B cell (primary cell): ENCODE measurements at regions of chr20 and their contacts with region 1.

Region 1: DNA sequence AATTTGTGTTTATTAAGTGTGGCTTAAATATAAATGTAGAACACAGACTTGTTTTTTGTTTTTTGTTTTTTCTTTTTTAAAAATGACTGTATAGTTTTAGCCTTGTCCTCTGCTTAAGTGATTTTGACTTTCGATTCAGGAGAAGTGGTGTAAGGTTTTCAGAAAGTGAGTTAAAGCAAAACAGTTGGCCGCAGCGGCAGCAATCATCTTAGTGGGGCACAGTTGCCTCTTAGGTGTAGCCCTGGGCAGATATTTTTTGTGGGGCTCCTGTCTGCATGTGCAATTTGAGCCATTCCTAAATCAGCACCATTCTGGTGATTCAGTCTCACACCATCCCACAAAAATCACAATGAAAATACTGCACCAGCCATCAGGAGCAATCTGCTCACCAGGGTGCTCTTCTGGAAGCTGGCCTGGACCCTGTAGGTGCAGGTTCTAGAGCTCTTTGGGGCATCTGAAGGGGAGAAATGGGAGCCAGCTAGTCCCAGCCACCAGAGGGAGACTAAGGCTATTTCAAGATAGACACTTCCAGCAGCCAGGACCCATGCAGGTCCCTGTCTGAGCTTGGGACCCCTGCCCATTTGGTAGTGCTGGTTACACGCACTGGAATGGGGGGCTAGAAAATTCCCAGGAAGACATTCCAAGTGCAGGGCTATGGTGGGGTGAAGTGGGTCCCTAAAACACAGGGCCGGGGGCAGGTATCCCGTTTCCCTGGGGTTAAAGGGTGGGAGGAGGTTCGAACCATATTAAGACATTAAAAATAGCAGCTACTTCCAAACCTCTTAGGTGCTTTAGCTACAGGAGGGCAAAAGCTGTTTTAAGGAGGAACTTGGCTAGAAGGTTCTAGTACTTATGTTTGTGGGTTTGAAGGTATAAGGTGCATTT is 156.6 kb downstream of the NFATC2 start:
- DNase-seq: peak; percentile 63
- ATAC-seq: peak; percentile 51
- H3K4me3 ChIP-seq: no peak overlapping the region
- H3K4me3 Mint-ChIP-seq: no peak overlapping the region
- H3K27ac ChIP-seq: peak overlapping the region in 1 of 2 donors; percentile 40
- H3K27ac Mint-ChIP-seq: peak overlapping the region; percentile 65
- H3K4me1 ChIP-seq: peaks cover 2 to 19% of the 10 kb centered on the region in 2 donors
- H3K4me1 Mint-ChIP-seq: peaks cover 24% of the 10 kb centered on the region
- H3K27me3 ChIP-seq: no peaks in the 10 kb centered on the region
- H3K27me3 Mint-ChIP-seq: no peaks in the 10 kb centered on the region
- CTCF ChIP-seq: peak; percentile 74

Region 2: DNA sequence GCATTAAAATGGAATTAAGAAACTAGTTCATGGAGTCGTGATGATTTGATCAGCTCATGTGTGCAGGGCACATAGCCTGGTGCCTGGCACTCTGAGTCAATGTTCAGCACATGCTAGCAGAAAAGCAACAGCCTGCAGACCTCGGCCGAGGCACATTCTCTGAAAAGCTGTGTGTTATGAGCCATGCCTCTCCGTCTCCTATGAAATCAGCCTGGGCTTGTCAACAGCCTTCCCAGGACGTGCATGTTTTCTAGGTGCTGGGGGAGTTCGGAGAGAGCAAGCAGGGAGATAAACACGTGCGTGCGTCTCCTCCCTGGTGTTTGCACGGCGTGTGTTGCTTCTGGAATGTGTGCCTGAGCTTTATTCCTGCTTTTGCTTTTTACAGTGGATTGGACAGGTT is 155.2 kb before region 1 on chr20:
- CTCF ChIA-PET with region 1: no interaction called
- POLR2A ChIA-PET with region 1: no interaction called
- intact Hi-C with region 1: no loop called
- DNase-seq: no peak
- ATAC-seq: no peak
- H3K4me3 ChIP-seq: no peak overlapping the region
- H3K4me3 Mint-ChIP-seq: no peak overlapping the region
- H3K27ac ChIP-seq: no peak overlapping the region
- H3K27ac Mint-ChIP-seq: no peak overlapping the region
- H3K4me1 ChIP-seq: no peaks in the 10 kb centered on the region
- H3K4me1 Mint-ChIP-seq: no peaks in the 10 kb centered on the region
- H3K27me3 ChIP-seq: no peaks in the 10 kb centered on the region
- H3K27me3 Mint-ChIP-seq: peaks cover 25% of the 10 kb centered on the region
- CTCF ChIP-seq: no peak

Region 3: DNA sequence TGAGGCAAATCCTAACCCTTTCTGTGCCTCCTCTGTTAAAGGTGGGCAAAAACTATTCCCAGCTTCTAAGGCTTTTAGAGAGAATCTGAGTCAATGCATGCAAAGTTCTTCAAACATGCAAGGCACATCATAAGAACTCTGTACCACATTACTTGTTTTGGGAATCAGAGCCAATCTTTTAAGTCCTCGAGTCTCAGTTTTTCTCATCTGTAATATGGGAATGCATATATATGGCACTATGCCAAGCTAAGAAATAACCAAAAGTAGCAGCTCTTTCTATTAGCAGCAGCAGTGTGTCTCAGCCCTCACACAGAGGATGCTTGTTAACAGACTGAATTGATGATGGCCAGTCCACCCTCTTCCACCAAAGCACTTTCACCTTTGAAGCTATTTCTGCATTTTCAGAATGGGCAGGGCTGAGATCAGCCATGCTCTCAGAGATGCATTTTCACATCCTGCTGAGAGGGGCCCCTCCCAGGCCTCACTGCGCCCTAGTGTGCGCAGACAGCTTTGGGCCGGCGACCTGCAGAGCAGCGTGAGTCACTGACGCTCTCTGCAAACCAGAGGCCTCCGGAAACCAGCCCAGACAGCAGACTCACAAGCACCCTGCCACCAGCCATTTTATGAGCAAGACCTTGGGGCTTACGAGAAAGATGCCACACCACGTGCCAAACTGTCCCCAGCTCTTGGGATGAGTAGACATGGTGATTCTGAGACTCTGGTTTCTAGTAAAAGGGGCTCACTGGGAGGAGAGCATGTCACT is 18.6 kb after region 1 on chr20:
- CTCF ChIA-PET with region 1: interaction called, 25 read pairs
- POLR2A ChIA-PET with region 1: no interaction called
- intact Hi-C with region 1: loop called (anchors 2 kb)
- DNase-seq: peak; percentile 92
- ATAC-seq: peak; percentile 85
- H3K4me3 ChIP-seq: no peak overlapping the region
- H3K4me3 Mint-ChIP-seq: peak overlapping the region; percentile 49
- H3K27ac ChIP-seq: peak overlapping the region; percentile 86 to 97
- H3K27ac Mint-ChIP-seq: peak overlapping the region; percentile 99
- H3K4me1 ChIP-seq: peaks cover 62 to 74% of the 10 kb centered on the region in 2 donors
- H3K4me1 Mint-ChIP-seq: peaks cover 77% of the 10 kb centered on the region
- H3K27me3 ChIP-seq: no peaks in the 10 kb centered on the region
- H3K27me3 Mint-ChIP-seq: no peaks in the 10 kb centered on the region
- CTCF ChIP-seq: no peak

Region 4: GRCh38 chr20:51417250-51418136 is 31.6 kb after region 1 on chr20:
- CTCF ChIA-PET with region 1: interaction called, 41 read pairs
- POLR2A ChIA-PET with region 1: interaction called, 4 read pairs
- intact Hi-C with region 1: loop called (anchors 2 kb)
- DNase-seq: no peak
- ATAC-seq: no peak
- H3K4me3 ChIP-seq: no peak overlapping the region
- H3K4me3 Mint-ChIP-seq: no peak overlapping the region
- H3K27ac ChIP-seq: peak overlapping the region in 1 of 2 donors; percentile 75
- H3K27ac Mint-ChIP-seq: peak overlapping the region; percentile 56
- H3K4me1 ChIP-seq: peaks cover 48 to 65% of the 10 kb centered on the region in 2 donors
- H3K4me1 Mint-ChIP-seq: peaks cover 63% of the 10 kb centered on the region
- H3K27me3 ChIP-seq: no peaks in the 10 kb centered on the region
- H3K27me3 Mint-ChIP-seq: no peaks in the 10 kb centered on the region
- CTCF ChIP-seq: no peak

Region 5: GRCh38 chr20:51456511-51457509 is 70.9 kb after region 1 on chr20:
- CTCF ChIA-PET with region 1: interaction called, 13 read pairs
- POLR2A ChIA-PET with region 1: no interaction called
- intact Hi-C with region 1: loop called (anchors 5 kb)
- DNase-seq: peak; percentile 34
- ATAC-seq: peak; percentile 31
- H3K4me3 ChIP-seq: peak overlapping the region in 1 of 5 experiments; percentile 36
- H3K4me3 Mint-ChIP-seq: peak overlapping the region; percentile 64
- H3K27ac ChIP-seq: peak overlapping the region in 1 of 2 donors; percentile 12
- H3K27ac Mint-ChIP-seq: peak overlapping the region; percentile 56
- H3K4me1 ChIP-seq: peaks cover 43 to 51% of the 10 kb centered on the region in 2 donors
- H3K4me1 Mint-ChIP-seq: peaks cover 45% of the 10 kb centered on the region
- H3K27me3 ChIP-seq: no peaks in the 10 kb centered on the region
- H3K27me3 Mint-ChIP-seq: no peaks in the 10 kb centered on the region
- CTCF ChIP-seq: no peak

Region 6: GRCh38 chr20:51541189-51542032 is 155.5 kb after region 1 on chr20:
- CTCF ChIA-PET with region 1: interaction called, 37 read pairs
- POLR2A ChIA-PET with region 1: interaction called, 6 read pairs
- intact Hi-C with region 1: loop called (anchors 1 kb)
- DNase-seq: peak; percentile 86
- ATAC-seq: peak; percentile 50
- H3K4me3 ChIP-seq: peak overlapping the region; percentile 61 to 89 (median 74)
- H3K4me3 Mint-ChIP-seq: peak overlapping the region; percentile 97
- H3K27ac ChIP-seq: peak overlapping the region; percentile 88 to 96
- H3K27ac Mint-ChIP-seq: peak overlapping the region; percentile 96
- H3K4me1 ChIP-seq: peaks cover 30 to 50% of the 10 kb centered on the region in 2 donors
- H3K4me1 Mint-ChIP-seq: peaks cover 54% of the 10 kb centered on the region
- H3K27me3 ChIP-seq: peaks cover 0 to 4% (median 0%) of the 10 kb centered on the region in 4 experiments
- H3K27me3 Mint-ChIP-seq: no peaks in the 10 kb centered on the region
- CTCF ChIP-seq: no peak

Region 7: GRCh38 chr20:51595058-51595532 is 209.2 kb after region 1 on chr20:
- CTCF ChIA-PET with region 1: interaction called, 127 read pairs
- POLR2A ChIA-PET with region 1: interaction called, 4 read pairs
- intact Hi-C with region 1: loop called (anchors 1 kb)
- DNase-seq: peak; percentile 86
- ATAC-seq: peak; percentile 92
- H3K4me3 ChIP-seq: no peak overlapping the region
- H3K4me3 Mint-ChIP-seq: peak overlapping the region; percentile 47
- H3K27ac ChIP-seq: no peak overlapping the region
- H3K27ac Mint-ChIP-seq: peak overlapping the region; percentile 60
- H3K4me1 ChIP-seq: peaks cover 17 to 19% of the 10 kb centered on the region in 2 donors
- H3K4me1 Mint-ChIP-seq: peaks cover 19% of the 10 kb centered on the region
- H3K27me3 ChIP-seq: peaks cover 0 to 12% (median 2%) of the 10 kb centered on the region in 4 experiments
- H3K27me3 Mint-ChIP-seq: peaks cover 57% of the 10 kb centered on the region
- CTCF ChIP-seq: peak; percentile 86

Region 8: GRCh38 chr20:51687062-51687461 is 301.2 kb after region 1 on chr20:
- CTCF ChIA-PET with region 1: no interaction called
- POLR2A ChIA-PET with region 1: no interaction called
- intact Hi-C with region 1: no loop called
- DNase-seq: no peak
- ATAC-seq: no peak
- H3K4me3 ChIP-seq: no peak overlapping the region
- H3K4me3 Mint-ChIP-seq: no peak overlapping the region
- H3K27ac ChIP-seq: no peak overlapping the region
- H3K27ac Mint-ChIP-seq: no peak overlapping the region
- H3K4me1 ChIP-seq: no peaks in the 10 kb centered on the region
- H3K4me1 Mint-ChIP-seq: peaks cover 4% of the 10 kb centered on the region
- H3K27me3 ChIP-seq: no peaks in the 10 kb centered on the region
- H3K27me3 Mint-ChIP-seq: peaks cover 7% of the 10 kb centered on the region
- CTCF ChIP-seq: no peak

Region 9: DNA sequence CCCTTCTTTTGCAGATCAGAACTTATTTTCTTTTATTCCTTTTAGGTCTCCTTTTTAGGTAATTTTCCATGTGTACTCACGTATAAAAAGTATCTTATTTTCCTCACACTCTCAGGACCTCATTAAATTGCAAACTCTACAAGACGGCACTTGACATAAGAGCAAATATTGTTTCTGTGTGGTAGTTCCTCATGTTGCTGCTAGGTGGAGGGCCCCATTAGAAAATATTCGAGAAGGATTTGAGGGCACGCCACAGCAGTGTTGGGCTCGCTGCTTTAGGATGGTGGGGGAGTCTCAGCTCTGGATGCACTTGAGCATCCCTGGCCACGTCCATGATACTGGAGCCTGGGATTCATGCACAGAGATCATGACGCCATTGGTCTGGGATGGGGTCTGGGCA is 870.6 kb after region 1 on chr20:
- CTCF ChIA-PET with region 1: no interaction called
- POLR2A ChIA-PET with region 1: no interaction called
- intact Hi-C with region 1: no loop called
- DNase-seq: no peak
- ATAC-seq: no peak
- H3K4me3 ChIP-seq: no peak overlapping the region
- H3K4me3 Mint-ChIP-seq: no peak overlapping the region
- H3K27ac ChIP-seq: no peak overlapping the region
- H3K27ac Mint-ChIP-seq: no peak overlapping the region
- H3K4me1 ChIP-seq: no peaks in the 10 kb centered on the region
- H3K4me1 Mint-ChIP-seq: no peaks in the 10 kb centered on the region
- H3K27me3 ChIP-seq: peaks cover 0 to 8% (median 0%) of the 10 kb centered on the region in 4 experiments
- H3K27me3 Mint-ChIP-seq: peaks cover 29% of the 10 kb centered on the region
- CTCF ChIP-seq: no peak